CD4-positive, alpha-beta T cell (primary cell): ENCODE measurements at regions of chr15 and their contacts with region 1.

Region 1: GRCh38 chr15:63833021-63833696 is 589 bp downstream of the HERC1 start:
- DNase-seq: peak; percentile 7 to 46 (median 19)
- ATAC-seq: peak; percentile 21
- H3K4me3 ChIP-seq: peak overlapping the region; percentile 92
- H3K4me3 Mint-ChIP-seq: peak overlapping the region; percentile 98
- H3K27ac ChIP-seq: peak overlapping the region; percentile 63 to 93
- H3K27ac Mint-ChIP-seq: peak overlapping the region; percentile 99
- H3K4me1 ChIP-seq: peaks cover 23% of the 10 kb centered on the region
- H3K4me1 Mint-ChIP-seq: peaks cover 67% of the 10 kb centered on the region
- H3K27me3 ChIP-seq: no peaks in the 10 kb centered on the region
- H3K27me3 Mint-ChIP-seq: no peaks in the 10 kb centered on the region
- CTCF ChIP-seq: no peak

Region 2: DNA sequence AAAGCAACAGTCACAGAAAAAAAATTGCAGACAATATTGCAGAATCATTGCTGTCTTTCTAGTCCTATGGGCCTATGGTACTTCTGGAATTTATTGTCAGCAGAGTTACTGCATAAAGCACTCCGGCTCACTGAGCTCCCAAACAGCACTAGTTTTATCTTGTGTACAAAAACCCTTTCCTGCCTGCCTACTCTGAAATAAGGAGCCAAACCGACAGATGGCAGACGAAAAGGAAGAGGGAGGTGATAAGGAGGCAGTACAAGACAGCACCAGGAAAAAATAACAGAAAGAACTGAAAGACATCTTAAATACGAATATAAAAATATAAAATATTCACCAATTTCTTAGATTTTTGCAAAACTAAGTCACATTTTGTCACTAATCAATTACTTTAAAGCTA is 15.0 kb before region 1 on chr15:
- CTCF ChIA-PET with region 1: interaction called, 4 read pairs
- POLR2A ChIA-PET with region 1: interaction called, 11 read pairs
- intact Hi-C with region 1: no loop called
- DNase-seq: peak in 4 of 14 experiments; percentile 14 to 36 (median 26)
- ATAC-seq: peak; percentile 64
- H3K4me3 ChIP-seq: no peak overlapping the region
- H3K4me3 Mint-ChIP-seq: peak overlapping the region; percentile 28
- H3K27ac ChIP-seq: no peak overlapping the region
- H3K27ac Mint-ChIP-seq: no peak overlapping the region
- H3K4me1 ChIP-seq: peaks cover 20% of the 10 kb centered on the region
- H3K4me1 Mint-ChIP-seq: peaks cover 87% of the 10 kb centered on the region
- H3K27me3 ChIP-seq: no peaks in the 10 kb centered on the region
- H3K27me3 Mint-ChIP-seq: no peaks in the 10 kb centered on the region
- CTCF ChIP-seq: no peak

Region 3: DNA sequence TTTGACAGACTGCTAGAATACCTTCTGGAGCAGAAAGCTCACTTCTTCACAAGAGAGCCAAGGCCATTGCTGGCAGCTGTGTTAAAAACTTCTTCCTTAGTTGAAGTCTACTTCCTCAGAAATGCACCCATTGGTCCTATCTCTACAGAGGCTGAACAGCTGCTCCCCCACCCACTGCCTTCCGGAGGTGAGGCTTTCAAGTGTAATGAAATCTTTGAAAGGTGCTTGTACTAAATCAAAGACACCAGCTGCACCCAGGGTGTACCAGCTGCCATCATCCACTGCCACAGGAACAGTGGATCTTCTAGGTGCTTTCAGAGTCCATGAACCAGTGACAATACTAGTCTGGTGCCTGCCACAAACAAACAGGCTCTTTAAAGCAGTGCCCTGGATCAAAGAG is 27.0 kb after region 1 on chr15:
- CTCF ChIA-PET with region 1: no interaction called
- POLR2A ChIA-PET with region 1: interaction called, 35 read pairs
- intact Hi-C with region 1: loop called in 1 of 2 experiments (anchors 1 kb)
- DNase-seq: peak; percentile 51 to 83 (median 69)
- ATAC-seq: peak; percentile 95
- H3K4me3 ChIP-seq: no peak overlapping the region
- H3K4me3 Mint-ChIP-seq: peak overlapping the region; percentile 59
- H3K27ac ChIP-seq: peak overlapping the region; percentile 58 to 64
- H3K27ac Mint-ChIP-seq: peak overlapping the region; percentile 98
- H3K4me1 ChIP-seq: peaks cover 32% of the 10 kb centered on the region
- H3K4me1 Mint-ChIP-seq: peaks cover 79% of the 10 kb centered on the region
- H3K27me3 ChIP-seq: no peaks in the 10 kb centered on the region
- H3K27me3 Mint-ChIP-seq: no peaks in the 10 kb centered on the region
- CTCF ChIP-seq: no peak

Region 4: GRCh38 chr15:63939531-63940130 is 106.5 kb after region 1 on chr15:
- CTCF ChIA-PET with region 1: no interaction called
- POLR2A ChIA-PET with region 1: no interaction called
- intact Hi-C with region 1: loop called in 1 of 2 experiments (anchors 5 kb)
- DNase-seq: peak in 5 of 14 experiments; percentile 9 to 67 (median 35)
- ATAC-seq: peak; percentile 59
- H3K4me3 ChIP-seq: no peak overlapping the region
- H3K4me3 Mint-ChIP-seq: no peak overlapping the region
- H3K27ac ChIP-seq: peak overlapping the region in 1 of 2 donors; percentile 41
- H3K27ac Mint-ChIP-seq: peak overlapping the region; percentile 79
- H3K4me1 ChIP-seq: peaks cover 29% of the 10 kb centered on the region
- H3K4me1 Mint-ChIP-seq: peaks cover 41% of the 10 kb centered on the region
- H3K27me3 ChIP-seq: no peaks in the 10 kb centered on the region
- H3K27me3 Mint-ChIP-seq: no peaks in the 10 kb centered on the region
- CTCF ChIP-seq: no peak

Region 5: GRCh38 chr15:64010719-64011118 is 177.6 kb after region 1 on chr15:
- CTCF ChIA-PET with region 1: interaction called, 3 read pairs
- POLR2A ChIA-PET with region 1: interaction called, 20 read pairs
- intact Hi-C with region 1: loop called (anchors 5 kb)
- DNase-seq: peak; percentile 75 to 95 (median 83)
- ATAC-seq: peak; percentile 93
- H3K4me3 ChIP-seq: no peak overlapping the region
- H3K4me3 Mint-ChIP-seq: peak overlapping the region; percentile 66
- H3K27ac ChIP-seq: peak overlapping the region; percentile 64 to 72
- H3K27ac Mint-ChIP-seq: peak overlapping the region; percentile 93
- H3K4me1 ChIP-seq: peaks cover 38% of the 10 kb centered on the region
- H3K4me1 Mint-ChIP-seq: peaks cover 41% of the 10 kb centered on the region
- H3K27me3 ChIP-seq: no peaks in the 10 kb centered on the region
- H3K27me3 Mint-ChIP-seq: no peaks in the 10 kb centered on the region
- CTCF ChIP-seq: peak; percentile 52